GM10248 (cell line): ENCODE measurements at regions of chr12 and their contacts with region 1.

Region 1: DNA sequence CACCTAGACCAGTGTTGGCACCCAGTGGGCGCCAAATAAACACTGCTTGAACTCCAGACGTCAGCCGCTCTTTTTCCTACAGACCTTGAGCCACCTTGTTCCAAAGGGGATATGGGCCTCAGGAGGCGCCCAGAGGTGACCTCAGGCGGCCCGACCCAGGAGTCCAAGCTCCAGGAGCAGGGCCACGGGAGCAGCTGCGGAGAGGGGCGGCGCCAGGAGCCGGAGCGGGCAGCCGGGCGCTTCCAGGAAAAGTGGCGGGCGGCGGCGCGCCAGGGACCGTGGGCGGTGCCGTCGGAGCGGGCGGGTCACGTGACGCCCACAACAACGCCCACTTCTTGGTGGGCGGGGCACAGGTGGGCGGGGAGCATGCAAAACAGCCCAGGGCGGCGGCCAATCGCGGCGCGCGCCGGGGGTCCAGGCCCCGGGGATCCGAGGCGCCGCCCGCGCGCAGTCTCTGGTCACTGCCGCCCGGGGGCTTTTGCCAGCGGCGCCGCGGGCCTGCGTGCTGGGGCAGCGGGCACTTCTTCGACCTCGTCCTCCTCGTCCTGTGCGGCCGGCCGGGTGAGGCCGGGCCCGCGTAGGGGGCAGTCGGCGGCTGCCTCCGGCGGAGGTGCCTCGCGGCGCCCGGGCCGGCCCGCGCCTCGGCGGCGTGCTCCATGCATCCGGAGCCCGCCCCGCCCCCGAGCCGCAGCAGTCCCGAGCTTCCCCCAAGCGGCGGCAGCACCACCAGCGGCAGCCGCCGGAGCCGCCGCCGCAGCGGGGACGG is at the start of gene ORAI1:
- DNase-seq: peak; percentile 94
- CTCF ChIP-seq: peak; percentile 25

Region 2: DNA sequence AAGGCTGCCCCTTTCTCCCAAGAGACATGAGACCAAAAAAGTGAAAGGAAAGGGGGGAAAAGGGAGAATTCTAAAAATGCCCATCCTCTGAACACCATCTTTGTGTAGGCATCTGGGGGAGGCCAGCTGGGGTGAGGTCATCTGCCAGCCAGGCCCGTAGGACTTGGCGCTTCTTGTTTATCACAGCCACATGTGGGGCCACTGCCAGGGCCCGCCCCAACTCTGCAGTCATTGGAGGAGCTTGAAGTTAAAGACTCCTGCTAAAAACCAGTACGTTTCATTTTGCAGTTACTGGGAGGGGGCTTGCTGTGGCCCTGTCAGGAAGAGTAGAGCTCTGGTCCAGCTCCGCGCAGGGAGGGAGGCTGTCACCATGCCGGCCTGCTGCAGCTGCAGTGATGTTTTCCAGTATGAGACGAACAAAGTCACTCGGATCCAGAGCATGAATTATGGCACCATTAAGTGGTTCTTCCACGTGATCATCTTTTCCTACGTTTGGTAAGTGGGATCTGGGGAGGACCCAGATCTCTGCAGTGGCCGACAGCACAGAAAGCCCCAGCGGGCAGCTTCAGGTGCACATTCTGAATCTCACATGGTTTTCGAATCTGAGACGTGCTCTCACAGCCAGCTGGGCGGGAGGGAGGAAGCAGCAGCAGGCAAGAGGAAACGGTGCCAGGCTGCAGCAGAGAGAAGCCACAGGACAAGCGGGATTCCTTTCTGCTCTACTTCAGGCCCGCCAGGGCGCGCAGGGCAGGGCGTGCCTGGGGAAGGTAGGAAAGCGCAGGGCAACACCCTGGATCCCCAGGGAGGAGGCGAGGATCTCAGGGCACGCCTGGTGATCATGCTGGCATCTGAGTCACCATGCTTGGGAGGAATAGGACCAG is 493.4 kb before region 1 on chr12 and contains the start of gene P2RX7:
- CTCF ChIA-PET with region 1: no interaction called
- POLR2A ChIA-PET with region 1: no interaction called
- DNase-seq: peak; percentile 65
- CTCF ChIP-seq: no peak

Region 3: GRCh38 chr12:121579981-121580868 is 46.0 kb before region 1 on chr12:
- CTCF ChIA-PET with region 1: interaction called, 15 read pairs
- POLR2A ChIA-PET with region 1: no interaction called
- DNase-seq: peak; percentile 71
- CTCF ChIP-seq: no peak

Region 4: DNA sequence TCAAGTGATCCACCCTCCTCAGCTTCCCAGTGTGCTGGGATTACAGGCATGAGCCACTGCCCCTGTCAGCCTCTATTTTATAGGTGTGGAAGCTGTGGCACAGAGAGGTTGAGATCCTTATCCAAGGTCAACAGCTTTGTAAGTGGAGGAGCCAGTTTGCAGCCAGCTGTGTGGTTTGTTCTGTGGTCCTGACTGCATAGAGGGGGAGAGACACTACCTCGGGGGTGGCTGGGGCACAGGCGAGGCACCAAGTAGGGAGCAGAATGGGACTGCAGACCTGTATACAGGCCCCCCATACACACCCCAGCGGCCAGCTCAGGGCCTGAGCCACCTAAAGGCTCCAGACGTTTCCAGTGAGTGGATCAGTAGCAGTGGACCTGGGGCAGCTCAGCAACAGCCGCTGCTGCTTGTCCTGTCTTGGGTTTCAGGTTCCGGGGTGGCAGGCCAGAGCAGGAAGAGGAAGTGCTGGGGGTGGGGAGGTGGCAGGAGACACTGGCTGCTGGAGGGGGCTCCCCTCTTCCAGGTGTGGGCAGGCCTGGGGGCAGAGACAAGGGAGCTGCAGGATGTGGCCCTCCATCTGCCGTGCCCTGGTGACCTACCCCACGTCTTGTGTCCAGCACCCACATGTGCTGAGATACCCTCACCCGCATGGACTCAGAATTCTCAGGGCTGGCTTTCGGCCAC is 11.1 kb after region 1 on chr12:
- CTCF ChIA-PET with region 1: interaction called, 53 read pairs
- POLR2A ChIA-PET with region 1: interaction called, 3 read pairs
- DNase-seq: peak; percentile 68
- CTCF ChIP-seq: no peak